ENCODE measurements at regions of chr20 and their contacts with region 1.

Region 1: DNA sequence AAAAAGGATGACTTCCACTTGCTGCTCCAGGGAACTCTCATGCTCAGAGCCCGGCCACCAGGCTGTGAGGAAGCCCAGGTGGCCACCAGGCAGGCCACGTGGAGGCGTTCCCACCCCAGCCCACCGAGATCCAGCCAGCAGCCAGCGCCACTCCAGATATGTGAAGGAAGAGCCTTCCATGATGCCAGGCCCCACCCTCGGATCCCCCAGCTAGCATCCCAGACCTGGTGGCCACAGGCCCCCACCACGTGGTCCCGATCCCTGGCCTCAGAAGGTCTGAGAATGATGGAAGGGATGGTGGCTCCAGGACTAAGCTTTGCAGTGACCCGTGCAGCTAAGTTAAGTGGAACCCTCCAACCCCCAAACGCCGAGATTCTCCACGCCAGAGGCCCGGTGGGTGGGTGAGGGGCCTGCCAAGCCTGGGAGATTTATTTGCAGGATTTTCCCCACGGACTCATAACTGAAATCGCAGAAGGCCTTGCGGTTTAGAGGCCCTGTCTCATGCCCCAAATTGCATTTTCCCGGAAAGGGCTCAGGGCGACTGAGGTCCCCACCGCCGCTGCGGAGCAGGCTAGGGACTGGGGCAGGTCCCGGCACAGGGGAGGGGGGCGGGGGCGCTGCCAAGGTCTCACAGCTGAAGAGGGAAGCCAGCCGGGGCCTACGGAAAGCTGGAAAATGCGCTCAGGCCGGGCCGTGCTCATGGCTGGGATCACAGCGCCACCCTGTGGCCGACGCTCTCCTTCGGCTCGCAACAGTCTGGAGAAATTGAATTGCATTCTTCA is 31.1 kb upstream of the CST7 start:
- DNase-seq: peak; percentile 42
- H3K4me3 Mint-ChIP-seq: no peak overlapping the region
- H3K27ac Mint-ChIP-seq: no peak overlapping the region
- H3K4me1 Mint-ChIP-seq: no peaks in the 10 kb centered on the region
- H3K27me3 Mint-ChIP-seq: no peaks in the 10 kb centered on the region
- CTCF ChIP-seq: peak; percentile 75

Region 2: DNA sequence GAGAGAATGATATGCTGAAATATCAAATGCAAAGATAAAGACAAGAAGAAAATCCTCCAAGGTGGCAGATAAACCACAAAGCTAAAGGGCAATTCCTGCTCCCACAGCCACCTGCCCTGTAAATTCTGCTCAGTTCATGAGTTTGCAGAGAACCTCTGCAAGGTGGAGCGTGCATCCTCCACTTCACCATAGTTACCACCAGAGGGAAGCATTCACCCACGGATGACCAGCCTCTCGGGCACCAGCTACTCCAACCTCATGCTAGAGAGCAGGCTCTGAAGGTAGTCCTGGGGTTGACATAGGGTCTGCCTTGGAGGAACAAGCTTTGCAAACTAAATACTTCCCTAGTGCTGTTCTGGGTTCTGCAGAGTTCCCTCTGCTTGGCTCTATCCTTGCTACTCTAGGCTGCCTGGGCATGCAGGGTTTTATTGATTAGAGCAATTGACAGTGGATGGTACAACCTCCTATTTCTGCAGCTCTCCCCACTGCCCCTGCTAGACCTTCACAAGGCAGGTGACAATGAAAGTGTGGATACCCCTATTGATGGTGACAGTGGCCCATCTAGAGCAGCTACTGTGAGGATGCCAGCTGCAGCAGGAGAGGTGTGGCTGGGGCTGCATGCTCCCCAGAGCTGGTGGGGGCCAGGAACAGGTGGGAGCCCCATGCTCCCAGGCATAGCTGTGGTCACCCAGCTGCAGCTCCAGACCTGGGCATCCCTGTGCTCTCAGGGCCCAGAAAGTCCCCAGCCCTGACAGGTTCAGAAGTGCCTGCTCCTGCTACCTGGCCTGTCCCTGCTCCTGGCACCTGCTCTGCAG is 980.5 kb before region 1 on chr20:
- CTCF ChIA-PET with region 1: interaction called, 15 read pairs
- POLR2A ChIA-PET with region 1: no interaction called
- intact Hi-C with region 1: no loop called
- DNase-seq: peak; percentile 14
- H3K4me3 Mint-ChIP-seq: no peak overlapping the region
- H3K27ac Mint-ChIP-seq: no peak overlapping the region
- H3K4me1 Mint-ChIP-seq: no peaks in the 10 kb centered on the region
- H3K27me3 Mint-ChIP-seq: no peaks in the 10 kb centered on the region
- CTCF ChIP-seq: peak; percentile 25

Region 3: GRCh38 chr20:23995905-23996666 is 921.9 kb before region 1 on chr20:
- CTCF ChIA-PET with region 1: no interaction called
- POLR2A ChIA-PET with region 1: no interaction called
- intact Hi-C with region 1: loop called (anchors 5 kb)
- DNase-seq: peak; percentile 43
- H3K4me3 Mint-ChIP-seq: no peak overlapping the region
- H3K27ac Mint-ChIP-seq: no peak overlapping the region
- H3K4me1 Mint-ChIP-seq: no peaks in the 10 kb centered on the region
- H3K27me3 Mint-ChIP-seq: no peaks in the 10 kb centered on the region
- CTCF ChIP-seq: peak; percentile 65

Region 4: DNA sequence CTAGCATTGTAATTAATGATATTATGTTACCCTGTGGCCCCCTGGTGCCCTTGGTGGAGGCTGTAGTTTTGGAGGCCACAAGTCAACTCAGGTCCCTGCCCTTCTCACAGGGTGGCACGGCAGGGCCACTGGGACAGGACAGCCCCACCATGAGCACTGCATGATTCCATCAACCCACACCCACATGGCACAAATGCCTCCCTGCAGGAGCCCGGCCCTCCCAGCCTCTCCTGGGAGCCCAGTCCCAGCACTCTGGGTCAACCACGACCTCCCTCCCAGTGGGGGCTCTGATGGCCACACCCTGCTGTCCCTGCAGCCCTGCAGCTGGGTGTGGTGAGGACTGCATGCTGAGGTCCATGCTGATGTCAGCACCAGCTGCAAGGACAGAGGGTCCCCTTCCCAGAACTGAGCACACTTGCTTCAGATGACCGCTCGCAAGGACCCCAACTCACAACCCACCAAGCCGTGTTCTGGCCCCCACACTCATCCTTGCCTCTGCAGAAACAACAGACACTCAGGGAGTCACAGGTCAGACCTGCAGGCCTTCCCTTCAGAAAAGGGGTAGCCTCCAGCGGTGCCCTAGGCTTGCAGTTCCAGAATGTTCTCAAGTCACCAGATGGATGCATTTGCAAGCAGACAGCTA is 15.4 kb after region 1 on chr20:
- CTCF ChIA-PET with region 1: interaction called, 61 read pairs
- POLR2A ChIA-PET with region 1: no interaction called
- intact Hi-C with region 1: no loop called
- DNase-seq: no peak
- H3K4me3 Mint-ChIP-seq: no peak overlapping the region
- H3K27ac Mint-ChIP-seq: no peak overlapping the region
- H3K4me1 Mint-ChIP-seq: peaks cover 15% of the 10 kb centered on the region
- H3K27me3 Mint-ChIP-seq: no peaks in the 10 kb centered on the region
- CTCF ChIP-seq: no peak

Region 5: DNA sequence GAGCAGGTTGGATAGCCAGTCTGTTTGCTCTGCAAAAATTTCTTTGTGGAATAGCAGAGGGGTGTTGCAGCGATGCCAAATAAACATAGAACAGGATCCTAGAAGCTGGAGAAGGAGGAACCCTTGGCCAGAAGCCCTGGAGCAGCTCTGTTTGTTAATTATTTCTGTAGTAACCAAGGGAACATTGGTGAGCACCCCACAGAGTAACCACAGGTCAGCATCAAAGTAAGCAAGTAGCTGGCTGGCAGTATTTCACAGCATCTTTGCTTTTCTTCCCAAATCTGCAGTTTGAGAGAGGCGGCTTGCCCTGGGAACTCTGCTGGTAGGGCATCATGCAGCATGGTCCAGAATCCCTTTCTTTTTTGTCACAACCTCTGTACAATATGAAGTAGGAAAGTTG is 87.2 kb after region 1 on chr20:
- CTCF ChIA-PET with region 1: no interaction called
- POLR2A ChIA-PET with region 1: no interaction called
- intact Hi-C with region 1: no loop called
- DNase-seq: no peak
- H3K4me3 Mint-ChIP-seq: no peak overlapping the region
- H3K27ac Mint-ChIP-seq: no peak overlapping the region
- H3K4me1 Mint-ChIP-seq: peaks cover 6% of the 10 kb centered on the region
- H3K27me3 Mint-ChIP-seq: peaks cover 6% of the 10 kb centered on the region
- CTCF ChIP-seq: no peak

Measured in MCF 10A (cell line).